Left cardiac atrium (tissue), 4 donors: ENCODE measurements at regions of chr18 and their contacts with region 1.

Region 1: DNA sequence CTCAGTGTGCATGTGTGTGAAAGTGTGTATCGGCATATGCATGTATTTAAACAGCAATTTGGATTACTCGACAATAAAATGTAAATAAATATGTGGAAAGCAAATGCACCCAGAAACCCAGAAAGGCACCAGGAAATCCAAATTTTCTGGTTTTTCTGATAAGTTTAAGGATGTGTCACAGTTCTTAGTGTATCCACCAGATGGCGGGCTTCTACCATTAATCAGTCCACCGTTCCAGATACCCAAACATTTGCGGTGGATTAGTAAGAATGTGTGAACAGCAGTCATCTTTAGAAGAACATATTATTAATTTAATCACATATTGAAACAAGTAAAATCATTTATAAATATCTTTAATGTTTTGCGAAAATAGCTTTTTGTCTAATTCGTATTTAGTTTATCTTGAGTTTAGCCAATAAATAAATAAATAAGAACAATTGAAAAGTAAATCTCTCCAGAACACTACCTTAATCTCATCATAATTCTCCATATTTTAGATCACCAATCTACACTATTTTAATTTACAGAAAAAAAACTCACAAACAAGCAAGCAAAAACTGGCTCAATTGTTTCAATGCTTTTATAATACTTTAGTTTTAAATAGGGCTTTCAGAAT is 298.9 kb downstream of the DSEL start:
- DNase-seq: peak; percentile 36
- ATAC-seq: peak; percentile 74

Region 2: GRCh38 chr18:68660354-68661183 is 1442.9 kb after region 1 on chr18:
- intact Hi-C with region 1: loop called (anchors 1 to 5 kb)
- DNase-seq: no peak
- ATAC-seq: no peak

Region 3: GRCh38 chr18:68735483-68736343 is 1518.1 kb after region 1 on chr18:
- intact Hi-C with region 1: loop called in 1 of 2 experiments (anchors 10 kb)
- DNase-seq: no peak
- ATAC-seq: peak; percentile 78 to 83